ENCODE measurements at regions of chr5 and their contacts with region 1.

Region 1: GRCh38 chr5:112025757-112026156 is 268.8 kb upstream of the NREP start:
- DNase-seq: peak; percentile 58
- ATAC-seq: peak; percentile 92
- H3K4me3 ChIP-seq: no peak overlapping the region
- H3K27ac ChIP-seq: no peak overlapping the region
- H3K4me1 ChIP-seq: no peaks in the 10 kb centered on the region
- H3K27me3 ChIP-seq: no peaks in the 10 kb centered on the region
- CTCF ChIP-seq: no peak
- EP300 ChIP-seq: 0 out of 4 replicates have a peak, but pooled peaks of 1 of the 2 experiments have one; percentile 8
- POLR2A ChIP-seq: no peak
- RAD21 ChIP-seq: no peak

Region 2: DNA sequence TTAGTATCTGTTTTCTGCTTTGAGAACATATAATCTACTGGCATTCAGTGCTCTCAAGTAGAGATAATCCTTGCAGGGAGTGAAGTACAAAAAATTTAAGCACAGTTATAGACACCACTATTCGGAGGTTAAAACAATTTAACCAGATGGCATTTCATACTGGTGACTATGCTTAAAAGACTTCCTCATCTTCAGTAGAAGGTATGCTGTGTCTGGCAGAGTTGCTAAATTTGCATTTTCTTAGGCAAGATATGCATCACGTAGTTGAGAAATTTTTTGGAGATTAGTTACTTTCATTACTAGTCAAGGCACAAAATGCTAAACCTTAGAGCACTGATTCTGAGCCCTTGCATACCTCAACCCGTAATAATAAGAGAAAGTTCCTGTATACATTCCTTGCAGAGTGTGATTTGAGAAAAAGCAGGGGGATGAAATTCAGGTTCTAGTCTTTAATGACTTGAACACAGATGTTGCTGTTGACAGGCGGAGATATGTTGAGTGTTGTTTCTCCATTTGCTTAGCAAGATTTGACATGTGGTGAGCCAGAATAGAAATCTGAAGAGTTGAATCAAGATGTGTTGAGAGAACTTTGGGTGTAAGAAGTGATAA is 442.7 kb before region 1 on chr5:
- CTCF ChIA-PET with region 1: no interaction called
- POLR2A ChIA-PET with region 1: no interaction called
- RAD21 ChIA-PET with region 1: no interaction called
- SMC1A ChIA-PET with region 1: no interaction called
- in situ Hi-C with region 1: no loop called
- intact Hi-C with region 1: no loop called
- DNase-seq: no peak
- ATAC-seq: peak; percentile 48
- H3K4me3 ChIP-seq: no peak overlapping the region
- H3K27ac ChIP-seq: no peak overlapping the region
- H3K4me1 ChIP-seq: no peaks in the 10 kb centered on the region
- H3K27me3 ChIP-seq: no peaks in the 10 kb centered on the region
- CTCF ChIP-seq: no peak
- EP300 ChIP-seq: no peak
- POLR2A ChIP-seq: no peak
- RAD21 ChIP-seq: no peak

Region 3: DNA sequence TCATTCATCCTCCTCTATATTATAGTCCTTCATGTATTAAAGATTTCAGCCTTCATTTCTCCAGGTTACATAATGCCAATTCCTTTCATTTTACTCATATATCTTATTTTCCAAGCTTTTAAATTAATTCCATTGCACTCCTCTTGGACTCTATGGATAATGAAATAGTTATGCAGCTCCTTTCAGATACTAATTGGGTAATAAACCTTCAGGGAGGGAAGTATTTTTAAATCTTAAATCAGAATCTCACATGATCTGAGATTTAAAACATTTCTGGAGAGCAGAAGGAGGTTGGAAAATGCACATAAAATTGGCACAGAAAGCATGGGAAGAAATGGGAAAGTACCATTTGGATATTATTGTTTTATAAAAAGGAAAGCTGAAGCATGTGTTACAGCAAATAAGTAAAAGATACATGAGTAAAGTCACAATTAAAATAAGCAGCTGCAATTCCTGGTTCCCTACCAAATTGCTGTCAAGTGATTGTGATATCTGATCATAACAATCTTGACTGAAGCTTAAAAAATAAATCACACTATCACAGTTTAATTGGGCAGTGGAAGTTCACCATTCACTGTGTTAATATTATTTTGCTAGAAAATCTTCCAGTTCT is 10.9 kb before region 1 on chr5:
- CTCF ChIA-PET with region 1: interaction called, 6 read pairs
- POLR2A ChIA-PET with region 1: interaction called, 3 read pairs
- RAD21 ChIA-PET with region 1: no interaction called
- SMC1A ChIA-PET with region 1: interaction called, 23 read pairs
- in situ Hi-C with region 1: no loop called
- intact Hi-C with region 1: no loop called
- DNase-seq: no peak
- ATAC-seq: no peak
- H3K4me3 ChIP-seq: no peak overlapping the region
- H3K27ac ChIP-seq: no peak overlapping the region
- H3K4me1 ChIP-seq: peaks cover 6% of the 10 kb centered on the region; the same call in 1 of the 2 replicates
- H3K27me3 ChIP-seq: no peaks in the 10 kb centered on the region
- CTCF ChIP-seq: no peak
- EP300 ChIP-seq: no peak
- POLR2A ChIP-seq: no peak
- RAD21 ChIP-seq: no peak

Region 4: GRCh38 chr5:112210430-112211005 is 184.8 kb after region 1 on chr5:
- CTCF ChIA-PET with region 1: no interaction called
- POLR2A ChIA-PET with region 1: no interaction called
- RAD21 ChIA-PET with region 1: no interaction called
- SMC1A ChIA-PET with region 1: no interaction called
- in situ Hi-C with region 1: no loop called
- intact Hi-C with region 1: no loop called
- DNase-seq: no peak
- ATAC-seq: peak; percentile 32; the same call in 2 of the 3 replicates
- H3K4me3 ChIP-seq: no peak overlapping the region
- H3K27ac ChIP-seq: no peak overlapping the region
- H3K4me1 ChIP-seq: no peaks in the 10 kb centered on the region
- H3K27me3 ChIP-seq: no peaks in the 10 kb centered on the region
- CTCF ChIP-seq: peak; percentile 44 to 50 (median 48); a peak in 5 of 6 replicates
- EP300 ChIP-seq: no peak
- POLR2A ChIP-seq: no peak
- RAD21 ChIP-seq: peak; percentile 58

Region 5: DNA sequence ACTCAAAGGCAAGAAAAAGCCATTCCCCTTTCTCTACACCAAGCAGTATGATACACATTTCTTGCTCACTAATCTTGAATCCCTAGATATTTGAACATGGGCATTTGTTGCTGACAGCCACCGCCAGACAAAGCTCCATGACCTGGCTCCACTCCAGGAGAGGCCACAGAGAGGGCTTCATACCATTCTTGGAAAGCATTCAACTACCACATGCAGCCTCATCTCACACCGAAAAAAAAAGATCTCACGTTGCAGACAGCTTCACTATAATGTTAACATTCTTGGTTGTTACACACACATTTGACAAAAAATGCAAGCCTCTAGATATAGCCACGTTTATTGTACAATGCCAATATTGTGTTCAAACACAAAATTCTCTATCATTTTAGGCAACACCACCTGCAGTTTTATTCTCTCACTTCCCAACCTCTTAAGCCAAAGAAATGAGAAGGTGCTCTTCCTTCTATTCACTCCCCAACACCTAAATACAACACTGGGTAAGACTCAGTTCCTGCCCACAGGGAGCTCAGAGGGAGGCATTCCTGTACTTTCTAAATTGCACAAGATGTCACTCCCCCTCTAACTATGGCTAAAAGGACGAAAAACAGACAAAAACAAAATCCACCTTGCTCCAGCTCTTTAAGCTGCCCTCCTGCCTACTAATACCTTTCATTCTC is 1186.6 kb after region 1 on chr5:
- CTCF ChIA-PET with region 1: no interaction called
- POLR2A ChIA-PET with region 1: no interaction called
- RAD21 ChIA-PET with region 1: no interaction called
- SMC1A ChIA-PET with region 1: no interaction called
- in situ Hi-C with region 1: no loop called
- intact Hi-C with region 1: no loop called
- DNase-seq: no peak
- ATAC-seq: no peak
- H3K4me3 ChIP-seq: no peak overlapping the region
- H3K27ac ChIP-seq: no peak overlapping the region
- H3K4me1 ChIP-seq: no peaks in the 10 kb centered on the region
- H3K27me3 ChIP-seq: no peaks in the 10 kb centered on the region
- CTCF ChIP-seq: no peak
- EP300 ChIP-seq: no peak
- POLR2A ChIP-seq: no peak
- RAD21 ChIP-seq: no peak